HCT116 (cell line): ENCODE measurements at regions of chr7 and their contacts with region 1.

Region 1: GRCh38 chr7:120554960-120555571 is 282.1 kb downstream of the KCND2 start:
- DNase-seq: peak; percentile 47
- ATAC-seq: peak; percentile 92
- H3K4me3 ChIP-seq: no peak overlapping the region
- H3K27ac ChIP-seq: no peak overlapping the region
- H3K4me1 ChIP-seq: no peaks in the 10 kb centered on the region
- H3K27me3 ChIP-seq: no peaks in the 10 kb centered on the region
- CTCF ChIP-seq: peak; percentile 69 to 89 (median 70); a peak in 5 of 6 replicates
- POLR2A ChIP-seq: no peak
- RAD21 ChIP-seq: peak; percentile 88

Region 2: GRCh38 chr7:119270045-119270464 is 1285.0 kb before region 1 on chr7:
- CTCF ChIA-PET with region 1: no interaction called
- POLR2A ChIA-PET with region 1: no interaction called
- RAD21 ChIA-PET with region 1: no interaction called
- intact Hi-C with region 1: loop called (anchors 1 kb)
- DNase-seq: peak; percentile 56
- ATAC-seq: peak; percentile 97
- H3K4me3 ChIP-seq: no peak overlapping the region
- H3K27ac ChIP-seq: no peak overlapping the region
- H3K4me1 ChIP-seq: no peaks in the 10 kb centered on the region
- H3K27me3 ChIP-seq: no peaks in the 10 kb centered on the region
- CTCF ChIP-seq: peak; percentile 61 to 91 (median 87); a peak in 5 of 6 replicates
- POLR2A ChIP-seq: no peak
- RAD21 ChIP-seq: peak; percentile 78

Region 3: DNA sequence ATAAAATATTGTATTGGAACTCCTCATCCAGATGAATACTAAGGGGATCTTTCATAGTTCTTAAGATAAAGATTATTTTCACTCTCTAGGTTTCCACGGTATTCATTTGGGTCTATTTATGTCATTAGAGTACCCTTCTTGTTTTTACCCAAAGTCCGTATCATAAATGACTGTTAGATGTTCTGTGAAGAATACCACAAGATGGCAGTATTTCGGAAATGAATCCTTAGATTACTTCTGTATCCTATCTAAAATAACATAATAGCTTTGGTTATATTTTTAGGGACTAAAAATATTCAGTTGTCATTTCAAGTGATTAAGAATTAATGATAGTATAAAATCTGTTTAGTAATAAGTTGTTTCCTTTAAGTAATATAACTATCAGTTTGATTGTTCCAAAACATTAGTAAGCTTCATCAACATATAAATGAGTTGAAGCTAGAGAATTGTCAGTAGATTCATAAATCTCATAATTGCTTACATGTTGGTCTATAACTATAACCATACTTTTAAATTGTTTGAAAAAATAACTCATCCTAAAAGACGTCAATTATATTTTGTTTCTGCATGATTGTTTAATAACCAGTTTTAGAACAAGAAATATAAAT is 619.5 kb before region 1 on chr7:
- CTCF ChIA-PET with region 1: interaction called, 10 read pairs
- POLR2A ChIA-PET with region 1: no interaction called
- RAD21 ChIA-PET with region 1: no interaction called
- intact Hi-C with region 1: loop called (anchors 1 kb)
- DNase-seq: peak; percentile 32
- ATAC-seq: peak; percentile 70
- H3K4me3 ChIP-seq: no peak overlapping the region
- H3K27ac ChIP-seq: no peak overlapping the region
- H3K4me1 ChIP-seq: no peaks in the 10 kb centered on the region
- H3K27me3 ChIP-seq: no peaks in the 10 kb centered on the region
- CTCF ChIP-seq: peak; percentile 26 to 58 (median 52); a peak in 5 of 6 replicates
- POLR2A ChIP-seq: no peak
- RAD21 ChIP-seq: peak; percentile 50

Region 4: GRCh38 chr7:120272261-120272660 is 282.8 kb before region 1 on chr7:
- CTCF ChIA-PET with region 1: no interaction called
- POLR2A ChIA-PET with region 1: no interaction called
- RAD21 ChIA-PET with region 1: no interaction called
- intact Hi-C with region 1: loop called (anchors 10 kb)
- DNase-seq: peak; percentile 37
- ATAC-seq: peak; percentile 78
- H3K4me3 ChIP-seq: no peak overlapping the region
- H3K27ac ChIP-seq: no peak overlapping the region
- H3K4me1 ChIP-seq: no peaks in the 10 kb centered on the region
- H3K27me3 ChIP-seq: no peaks in the 10 kb centered on the region
- CTCF ChIP-seq: peak; percentile 59 to 73 (median 61); a peak in 5 of 6 replicates
- POLR2A ChIP-seq: no peak
- RAD21 ChIP-seq: peak; percentile 82

Region 5: DNA sequence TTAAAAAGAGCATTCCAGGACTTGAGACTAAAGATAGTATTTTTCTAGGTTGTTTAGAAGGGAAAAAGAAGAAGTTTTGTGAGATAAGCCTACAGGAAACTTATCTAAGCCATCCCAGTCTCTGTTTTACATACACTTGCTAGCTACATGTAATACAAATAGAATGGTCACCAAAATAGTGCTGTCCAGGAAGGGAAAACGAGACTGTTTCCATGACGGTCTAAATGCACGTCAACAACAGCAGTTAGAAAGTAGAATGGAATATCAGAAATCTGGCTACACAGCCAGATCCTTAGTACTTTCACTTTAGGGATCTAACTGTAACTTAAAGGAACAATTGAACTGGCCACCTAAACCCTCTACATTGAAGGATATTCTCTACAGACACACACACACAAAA is 185.3 kb after region 1 on chr7:
- CTCF ChIA-PET with region 1: no interaction called
- POLR2A ChIA-PET with region 1: no interaction called
- RAD21 ChIA-PET with region 1: no interaction called
- intact Hi-C with region 1: no loop called
- DNase-seq: no peak
- ATAC-seq: no peak
- H3K4me3 ChIP-seq: no peak overlapping the region
- H3K27ac ChIP-seq: no peak overlapping the region
- H3K4me1 ChIP-seq: no peaks in the 10 kb centered on the region
- H3K27me3 ChIP-seq: no peaks in the 10 kb centered on the region
- CTCF ChIP-seq: no peak
- POLR2A ChIP-seq: no peak
- RAD21 ChIP-seq: no peak

Region 6: DNA sequence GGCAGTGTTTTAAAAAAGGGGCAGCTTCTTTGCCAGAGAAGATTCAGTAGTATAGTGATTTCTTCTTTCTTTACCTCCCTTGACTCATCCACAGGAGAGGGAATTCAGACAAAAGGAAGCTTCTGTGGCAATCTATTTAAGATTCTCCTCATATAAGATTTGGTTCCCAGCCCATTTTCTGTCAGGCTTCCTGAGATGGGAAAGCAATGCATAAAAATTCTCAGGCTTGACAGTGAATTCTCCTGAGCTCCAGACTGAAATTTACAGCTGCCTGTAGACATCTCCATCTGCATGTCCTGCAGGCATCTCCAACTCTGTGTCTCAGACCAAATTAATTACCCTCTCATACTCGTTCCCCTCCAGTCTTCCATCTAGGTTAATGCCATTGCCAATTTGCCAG is 230.0 kb after region 1 on chr7:
- CTCF ChIA-PET with region 1: no interaction called
- POLR2A ChIA-PET with region 1: no interaction called
- RAD21 ChIA-PET with region 1: no interaction called
- intact Hi-C with region 1: no loop called
- DNase-seq: no peak
- ATAC-seq: no peak
- H3K4me3 ChIP-seq: no peak overlapping the region
- H3K27ac ChIP-seq: no peak overlapping the region
- H3K4me1 ChIP-seq: no peaks in the 10 kb centered on the region
- H3K27me3 ChIP-seq: no peaks in the 10 kb centered on the region
- CTCF ChIP-seq: no peak
- POLR2A ChIP-seq: no peak
- RAD21 ChIP-seq: no peak

Region 7: GRCh38 chr7:120898715-120899499 is 343.8 kb after region 1 on chr7:
- CTCF ChIA-PET with region 1: no interaction called
- POLR2A ChIA-PET with region 1: no interaction called
- RAD21 ChIA-PET with region 1: no interaction called
- intact Hi-C with region 1: no loop called
- DNase-seq: no peak
- ATAC-seq: no peak
- H3K4me3 ChIP-seq: no peak overlapping the region
- H3K27ac ChIP-seq: no peak overlapping the region
- H3K4me1 ChIP-seq: no peaks in the 10 kb centered on the region
- H3K27me3 ChIP-seq: no peaks in the 10 kb centered on the region
- CTCF ChIP-seq: no peak
- POLR2A ChIP-seq: no peak
- RAD21 ChIP-seq: no peak

Region 8: GRCh38 chr7:121244120-121244870 is 689.2 kb after region 1 on chr7:
- CTCF ChIA-PET with region 1: no interaction called
- POLR2A ChIA-PET with region 1: no interaction called
- RAD21 ChIA-PET with region 1: no interaction called
- intact Hi-C with region 1: no loop called
- DNase-seq: no peak
- ATAC-seq: no peak
- H3K4me3 ChIP-seq: no peak overlapping the region
- H3K27ac ChIP-seq: no peak overlapping the region
- H3K4me1 ChIP-seq: no peaks in the 10 kb centered on the region
- H3K27me3 ChIP-seq: no peaks in the 10 kb centered on the region
- CTCF ChIP-seq: no peak
- POLR2A ChIP-seq: no peak
- RAD21 ChIP-seq: no peak